ENCODE measurements at regions of chr6 and their contacts with region 1.

Region 1: DNA sequence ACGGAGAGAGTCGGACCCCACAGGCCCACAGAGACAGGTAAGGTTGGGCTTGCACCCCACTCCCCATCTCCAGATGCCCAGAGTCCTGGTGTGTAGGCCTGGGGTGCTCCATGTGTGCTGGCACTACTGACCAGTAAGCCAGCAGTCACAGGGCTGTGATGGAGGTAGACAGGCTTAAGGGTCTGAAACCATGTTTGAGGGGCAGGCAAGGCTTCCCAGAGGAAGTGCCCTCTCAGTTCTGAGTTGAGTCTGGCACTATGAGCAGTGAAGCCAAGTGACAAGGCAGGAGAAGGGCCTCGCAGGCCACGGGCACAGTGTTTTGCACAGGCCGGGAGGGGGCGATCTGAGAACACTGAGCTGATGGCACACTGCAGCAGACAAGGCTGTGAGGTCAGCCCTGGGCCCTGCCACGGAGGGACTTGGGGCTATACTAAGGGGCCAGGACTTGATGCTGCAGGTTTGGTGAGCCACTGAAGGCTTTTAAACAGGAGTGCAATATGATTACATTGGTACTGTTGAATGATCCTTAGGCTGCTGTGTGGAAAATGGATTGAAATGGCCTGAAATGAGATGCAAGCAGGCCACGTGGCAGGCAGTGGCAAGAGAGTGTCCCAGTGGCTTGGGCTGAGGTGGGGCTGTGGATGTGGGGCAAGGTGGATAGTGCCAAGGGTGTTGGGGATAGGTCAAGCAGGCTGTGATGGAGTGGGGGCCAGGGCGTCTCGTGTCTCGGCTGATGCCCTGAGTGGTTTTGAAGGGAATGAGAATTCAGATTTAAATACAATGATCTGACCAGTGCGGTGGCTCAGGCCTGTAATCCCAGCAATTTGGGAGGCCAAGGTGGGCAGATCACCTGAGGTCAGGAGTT is 20.3 kb downstream of the TTBK1 start:
- DNase-seq: peak; percentile 93

Region 2: DNA sequence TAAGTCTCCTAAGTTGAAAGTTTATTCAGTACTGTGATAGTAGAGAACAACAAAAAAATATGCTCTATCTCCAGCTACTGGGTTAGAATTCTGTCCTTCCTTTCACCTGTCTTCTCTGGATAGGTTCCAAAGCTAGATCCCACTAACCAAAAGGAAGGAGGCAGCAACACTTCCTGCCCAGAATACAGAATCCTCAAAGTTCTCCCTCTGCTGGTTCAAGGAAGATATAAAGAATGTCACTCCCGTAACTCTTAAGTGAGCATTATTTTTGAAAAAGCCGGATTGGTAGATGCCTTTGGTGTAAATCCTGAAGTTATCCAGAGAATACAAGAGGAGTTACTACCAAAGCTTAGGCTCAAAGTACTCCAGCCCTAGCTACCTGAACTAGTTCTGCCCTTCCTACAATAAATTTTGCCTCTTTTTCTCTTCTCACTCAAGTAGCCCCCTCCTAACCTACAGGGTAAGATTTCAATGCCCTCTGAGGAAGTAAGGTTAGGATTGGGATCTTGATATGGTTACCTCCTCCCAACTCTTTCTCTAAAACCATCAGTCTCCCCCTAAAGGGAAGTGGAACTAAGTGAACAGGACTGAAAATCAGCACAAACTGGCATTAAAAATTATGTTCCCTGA is 71.0 kb after region 1 on chr6:
- intact Hi-C with region 1: loop called (anchors 2 to 10 kb)
- DNase-seq: no peak

Region 3: GRCh38 chr6:43817192-43817591 is 553.6 kb after region 1 on chr6:
- intact Hi-C with region 1: no loop called
- DNase-seq: no peak